Sigmoid colon (tissue), 7 donors: ENCODE measurements at regions of chr9 and their contacts with region 1.

Region 1: DNA sequence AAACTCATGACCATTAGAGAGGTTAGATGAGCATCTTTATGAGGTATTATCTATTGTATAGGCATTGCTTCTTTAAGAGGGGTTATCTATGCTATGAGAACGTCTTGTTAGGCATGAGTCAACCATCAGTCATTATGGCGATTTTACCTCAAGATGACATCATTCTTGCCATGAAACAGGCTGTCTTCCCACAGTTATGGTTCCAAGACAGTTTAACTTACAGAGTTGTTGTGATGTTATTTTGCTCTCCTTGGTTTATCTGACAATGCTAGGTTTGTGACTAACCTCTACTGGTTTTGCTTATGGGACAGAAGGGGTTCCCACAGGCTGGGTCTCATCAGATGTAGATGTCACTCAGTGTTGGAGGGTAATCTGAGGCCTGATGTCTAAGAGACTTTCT is 1864.7 kb upstream of the ACO1 start:
- DNase-seq: no peak
- H3K4me3 ChIP-seq: no peak overlapping the region
- H3K27ac ChIP-seq: no peak overlapping the region
- H3K4me1 ChIP-seq: no peaks in the 10 kb centered on the region
- H3K27me3 ChIP-seq: no peaks in the 10 kb centered on the region
- CTCF ChIP-seq: no peak
- EP300 ChIP-seq: no peak
- POLR2A ChIP-seq: no peak

Region 2: GRCh38 chr9:28518439-28518838 is 2001.3 kb before region 1 on chr9:
- intact Hi-C with region 1: loop called (anchors 10 kb)
- DNase-seq: no peak
- H3K4me3 ChIP-seq: no peak overlapping the region
- H3K27ac ChIP-seq: no peak overlapping the region
- H3K4me1 ChIP-seq: no peaks in the 10 kb centered on the region
- H3K27me3 ChIP-seq: no peaks in the 10 kb centered on the region
- CTCF ChIP-seq: no peak
- EP300 ChIP-seq: no peak
- POLR2A ChIP-seq: no peak

Region 3: GRCh38 chr9:30459156-30459555 is 60.6 kb before region 1 on chr9:
- intact Hi-C with region 1: no loop called
- DNase-seq: no peak
- H3K4me3 ChIP-seq: no peak overlapping the region
- H3K27ac ChIP-seq: no peak overlapping the region
- H3K4me1 ChIP-seq: no peaks in the 10 kb centered on the region
- H3K27me3 ChIP-seq: no peaks in the 10 kb centered on the region
- CTCF ChIP-seq: no peak
- EP300 ChIP-seq: no peak
- POLR2A ChIP-seq: no peak

Region 4: DNA sequence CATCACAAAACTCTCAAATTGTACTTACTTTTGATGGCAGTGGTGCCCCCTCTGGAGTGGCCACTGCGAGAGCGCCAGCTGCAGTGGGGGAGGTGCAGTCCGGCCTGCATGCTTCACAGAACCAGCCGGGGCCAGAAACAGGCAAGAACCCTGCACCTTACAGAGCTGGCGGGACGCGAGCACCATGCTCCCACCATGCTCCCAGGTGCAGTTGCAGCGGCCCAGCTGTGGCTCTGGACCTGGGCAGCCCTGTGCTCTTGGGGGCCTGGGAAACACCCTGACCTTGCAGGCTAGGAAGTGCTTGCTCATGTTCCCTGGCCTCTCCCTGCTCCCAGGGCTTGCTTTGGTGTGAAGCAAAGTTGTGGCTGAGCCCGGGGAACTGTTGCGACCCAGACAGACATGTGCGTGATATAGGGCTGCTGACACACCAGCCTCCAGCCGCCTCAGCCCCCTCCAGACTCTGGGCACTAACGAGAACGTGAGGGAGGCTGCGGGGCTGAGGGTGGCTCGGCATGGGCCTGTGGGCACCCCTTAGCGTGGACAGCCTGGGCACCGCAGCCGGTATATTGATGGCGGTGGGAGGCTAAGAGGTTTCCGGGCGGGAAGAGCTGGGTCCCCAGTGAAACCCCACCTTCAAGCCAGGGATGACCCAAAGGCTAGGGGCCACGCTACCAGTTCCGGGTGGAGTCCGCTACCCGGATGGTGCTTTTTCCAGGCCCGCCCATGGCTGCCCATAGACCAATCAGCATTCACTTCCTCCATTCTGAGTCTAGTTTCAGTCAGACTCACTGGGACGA is 54.8 kb after region 1 on chr9:
- intact Hi-C with region 1: loop called (anchors 10 kb)
- DNase-seq: no peak
- H3K4me3 ChIP-seq: no peak overlapping the region
- H3K27ac ChIP-seq: no peak overlapping the region
- H3K4me1 ChIP-seq: no peaks in the 10 kb centered on the region
- H3K27me3 ChIP-seq: no peaks in the 10 kb centered on the region
- CTCF ChIP-seq: no peak
- EP300 ChIP-seq: no peak
- POLR2A ChIP-seq: no peak